Activated CD8-positive, alpha-beta T cell treated with anti-CD3 and anti-CD28 coated beads for 36 hours (primary cell): ENCODE measurements at regions of chr17 and their contacts with region 1.

Region 1: GRCh38 chr17:59547131-59547915 is 18.1 kb upstream of the DHX40 start:
- DNase-seq: no peak
- ATAC-seq: no peak
- H3K4me3 Mint-ChIP-seq: no peak overlapping the region
- H3K27ac Mint-ChIP-seq: no peak overlapping the region
- H3K4me1 Mint-ChIP-seq: no peaks in the 10 kb centered on the region
- H3K27me3 Mint-ChIP-seq: no peaks in the 10 kb centered on the region
- CTCF ChIP-seq: no peak

Region 2: DNA sequence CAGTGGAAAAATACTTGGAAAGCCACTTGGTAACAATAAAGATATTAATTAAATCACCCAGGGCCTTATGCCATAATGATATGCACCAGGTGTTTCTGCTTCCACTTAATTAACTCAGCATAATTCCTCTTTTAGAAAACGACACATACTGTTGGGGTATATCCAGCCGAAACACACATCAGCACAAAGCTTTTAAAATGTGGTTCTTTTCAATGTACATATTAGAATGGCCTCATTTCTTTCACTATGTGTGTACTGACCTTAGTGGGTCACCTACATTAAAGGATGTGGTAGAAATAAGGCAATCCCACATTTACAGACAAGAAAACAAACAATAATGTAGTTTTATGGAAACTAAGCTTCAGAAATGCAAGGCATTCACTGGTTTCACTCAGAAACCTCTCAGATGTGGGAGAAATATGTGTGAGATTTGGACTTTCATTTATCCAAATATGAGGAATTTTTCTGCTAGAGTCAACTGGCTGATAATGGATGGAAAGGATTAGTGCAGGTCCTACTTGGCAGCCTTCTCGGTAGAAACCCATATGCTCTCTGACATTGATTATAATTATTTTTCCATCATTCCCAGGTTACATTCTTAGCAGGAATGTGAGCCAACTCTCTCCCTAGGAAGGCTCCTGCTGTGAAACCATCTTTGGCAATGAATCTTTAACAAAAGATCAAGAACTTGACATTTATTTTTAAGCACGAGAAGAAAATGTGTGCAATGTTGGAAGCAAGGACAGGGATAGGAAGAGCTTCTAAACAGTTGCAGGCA is 48.6 kb before region 1 on chr17:
- CTCF ChIA-PET with region 1: no interaction called
- POLR2A ChIA-PET with region 1: no interaction called
- intact Hi-C with region 1: no loop called
- DNase-seq: no peak
- ATAC-seq: no peak
- H3K4me3 Mint-ChIP-seq: no peak overlapping the region
- H3K27ac Mint-ChIP-seq: no peak overlapping the region
- H3K4me1 Mint-ChIP-seq: no peaks in the 10 kb centered on the region
- H3K27me3 Mint-ChIP-seq: no peaks in the 10 kb centered on the region
- CTCF ChIP-seq: no peak

Region 3: GRCh38 chr17:59521204-59522126 is 25.9 kb before region 1 on chr17:
- CTCF ChIA-PET with region 1: interaction called, 15 read pairs
- POLR2A ChIA-PET with region 1: no interaction called
- intact Hi-C with region 1: no loop called
- DNase-seq: peak; percentile 72
- ATAC-seq: peak; percentile 83
- H3K4me3 Mint-ChIP-seq: no peak overlapping the region
- H3K27ac Mint-ChIP-seq: no peak overlapping the region
- H3K4me1 Mint-ChIP-seq: peaks cover 2% of the 10 kb centered on the region
- H3K27me3 Mint-ChIP-seq: peaks cover 7% of the 10 kb centered on the region
- CTCF ChIP-seq: peak; percentile 97

Region 4: DNA sequence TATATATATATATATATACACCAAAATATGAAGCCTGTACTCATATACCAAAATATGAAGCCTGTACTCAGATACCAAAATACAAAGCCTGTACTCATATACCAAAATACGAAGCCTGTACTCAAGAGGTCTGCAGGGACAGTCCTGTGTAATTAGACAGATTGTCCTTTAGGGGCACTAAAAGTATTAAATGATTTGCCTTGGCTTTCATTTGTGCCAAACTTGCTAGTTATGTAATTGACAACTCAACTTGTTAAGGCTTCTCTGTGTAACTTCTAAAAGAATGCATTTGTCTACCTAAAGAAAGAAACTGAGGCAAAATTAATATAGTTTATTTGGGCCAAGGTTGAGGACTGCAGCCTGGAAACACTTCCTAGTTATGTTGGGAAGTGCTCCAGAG is 12.7 kb before region 1 on chr17:
- CTCF ChIA-PET with region 1: no interaction called
- POLR2A ChIA-PET with region 1: no interaction called
- intact Hi-C with region 1: no loop called
- DNase-seq: no peak
- ATAC-seq: no peak
- H3K4me3 Mint-ChIP-seq: no peak overlapping the region
- H3K27ac Mint-ChIP-seq: no peak overlapping the region
- H3K4me1 Mint-ChIP-seq: no peaks in the 10 kb centered on the region
- H3K27me3 Mint-ChIP-seq: no peaks in the 10 kb centered on the region
- CTCF ChIP-seq: no peak

Region 5: GRCh38 chr17:59558977-59559376 is 11.7 kb after region 1 on chr17:
- CTCF ChIA-PET with region 1: no interaction called
- POLR2A ChIA-PET with region 1: no interaction called
- intact Hi-C with region 1: no loop called
- DNase-seq: no peak
- ATAC-seq: no peak
- H3K4me3 Mint-ChIP-seq: no peak overlapping the region
- H3K27ac Mint-ChIP-seq: no peak overlapping the region
- H3K4me1 Mint-ChIP-seq: no peaks in the 10 kb centered on the region
- H3K27me3 Mint-ChIP-seq: no peaks in the 10 kb centered on the region
- CTCF ChIP-seq: no peak